Activated CD8-positive, alpha-beta memory T cell treated with anti-CD3 and anti-CD28 coated beads, Interleukin-2, amount 10 ng/mL, durations not matched to agents 7 days and 5 days (primary cell): ENCODE measurements at regions of chr5 and their contacts with region 1.

Region 1: GRCh38 chr5:144170276-144171024 is at the starts of genes KCTD16 and YIPF5:
- DNase-seq: peak; percentile 99
- ATAC-seq: peak; percentile 99
- H3K4me3 Mint-ChIP-seq: peak within 1 kb of the TSS; percentile 98
- H3K27ac Mint-ChIP-seq: peak within 1 kb of the TSS; percentile 87
- H3K4me1 Mint-ChIP-seq: peaks cover 39% of the 10 kb centered on the region
- H3K27me3 Mint-ChIP-seq: peaks cover 12% of the 10 kb centered on the region
- total RNA-seq, gene KCTD16: 0.12 to 0.19 TPM
- total RNA-seq, gene YIPF5: 26.9 to 34.3 TPM

Region 2: DNA sequence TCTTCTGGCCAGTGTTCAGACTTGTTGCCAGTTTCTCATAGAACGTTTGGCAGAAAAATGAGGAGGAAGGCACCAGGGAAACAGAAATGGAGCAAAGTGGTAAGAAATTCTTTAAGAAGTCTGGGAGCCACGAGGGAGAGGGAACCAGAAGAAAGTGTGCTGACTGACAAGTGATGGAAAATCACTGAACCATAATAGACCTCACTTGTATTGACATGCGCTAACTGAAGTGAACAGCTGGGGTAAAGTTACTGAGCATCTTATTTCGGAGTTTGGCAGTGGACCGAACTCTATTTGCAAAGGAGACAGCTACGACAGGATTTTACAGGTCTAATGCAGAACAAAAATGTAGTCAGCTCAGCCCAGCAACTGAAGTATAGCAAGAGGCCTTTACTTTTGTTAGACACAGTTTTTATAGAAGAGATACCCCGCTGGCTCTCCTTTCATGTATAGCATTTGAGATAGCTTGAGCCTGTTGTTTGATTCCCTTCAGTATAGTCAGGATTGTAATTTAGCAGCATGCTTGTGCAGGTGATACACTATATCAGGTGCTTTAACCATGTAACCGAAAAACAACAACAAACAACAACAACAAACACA is 304.9 kb before region 1 on chr5:
- CTCF ChIA-PET with region 1: no interaction called
- DNase-seq: no peak
- ATAC-seq: no peak
- H3K4me3 Mint-ChIP-seq: no peak overlapping the region
- H3K27ac Mint-ChIP-seq: no peak overlapping the region
- H3K4me1 Mint-ChIP-seq: no peaks in the 10 kb centered on the region
- H3K27me3 Mint-ChIP-seq: peaks cover 5% of the 10 kb centered on the region

Region 3: GRCh38 chr5:143896966-143897365 is 273.5 kb before region 1 on chr5:
- CTCF ChIA-PET with region 1: no interaction called
- DNase-seq: no peak
- ATAC-seq: no peak
- H3K4me3 Mint-ChIP-seq: no peak overlapping the region
- H3K27ac Mint-ChIP-seq: no peak overlapping the region
- H3K4me1 Mint-ChIP-seq: peaks cover 14% of the 10 kb centered on the region
- H3K27me3 Mint-ChIP-seq: peaks cover 6% of the 10 kb centered on the region

Region 4: DNA sequence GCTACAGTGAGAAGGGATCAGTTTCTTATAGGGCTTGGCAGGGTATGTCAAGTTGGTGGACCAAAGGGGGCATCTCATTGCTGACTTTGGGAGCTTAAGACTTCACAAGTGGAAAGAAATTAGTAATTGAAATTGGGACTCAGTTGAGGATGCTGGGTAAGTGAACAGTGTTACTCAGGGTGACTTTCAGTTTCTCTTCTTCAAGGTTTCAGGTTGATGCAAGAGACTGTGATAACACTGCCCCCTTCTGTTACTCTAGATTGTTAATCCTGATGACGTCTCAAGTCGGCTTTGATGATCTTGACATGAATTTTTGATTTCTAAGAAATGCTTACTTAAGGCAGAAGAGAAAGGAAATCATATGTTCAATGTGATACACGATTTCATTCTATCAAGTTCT is 21.5 kb after region 1 on chr5:
- CTCF ChIA-PET with region 1: interaction called, 27 read pairs
- DNase-seq: peak; percentile 50
- ATAC-seq: peak; percentile 79
- H3K4me3 Mint-ChIP-seq: no peak overlapping the region
- H3K27ac Mint-ChIP-seq: no peak overlapping the region
- H3K4me1 Mint-ChIP-seq: peaks cover 46% of the 10 kb centered on the region
- H3K27me3 Mint-ChIP-seq: no peaks in the 10 kb centered on the region